ENCODE measurements at regions of chr7 and their contacts with region 1.

Region 1: GRCh38 chr7:50304158-50304910 is at the start of gene IKZF1:
- DNase-seq: peak; percentile 66
- ATAC-seq: peak; percentile 25
- H3K4me3 Mint-ChIP-seq: peak within 1 kb of the TSS; percentile 94
- H3K27ac Mint-ChIP-seq: peak within 1 kb of the TSS; percentile 97
- H3K4me1 Mint-ChIP-seq: peaks cover 33% of the 10 kb centered on the region
- H3K27me3 Mint-ChIP-seq: no peaks in the 10 kb centered on the region
- CTCF ChIP-seq: no peak
- total RNA-seq, gene IKZF1: 277 to 295 TPM

Region 2: DNA sequence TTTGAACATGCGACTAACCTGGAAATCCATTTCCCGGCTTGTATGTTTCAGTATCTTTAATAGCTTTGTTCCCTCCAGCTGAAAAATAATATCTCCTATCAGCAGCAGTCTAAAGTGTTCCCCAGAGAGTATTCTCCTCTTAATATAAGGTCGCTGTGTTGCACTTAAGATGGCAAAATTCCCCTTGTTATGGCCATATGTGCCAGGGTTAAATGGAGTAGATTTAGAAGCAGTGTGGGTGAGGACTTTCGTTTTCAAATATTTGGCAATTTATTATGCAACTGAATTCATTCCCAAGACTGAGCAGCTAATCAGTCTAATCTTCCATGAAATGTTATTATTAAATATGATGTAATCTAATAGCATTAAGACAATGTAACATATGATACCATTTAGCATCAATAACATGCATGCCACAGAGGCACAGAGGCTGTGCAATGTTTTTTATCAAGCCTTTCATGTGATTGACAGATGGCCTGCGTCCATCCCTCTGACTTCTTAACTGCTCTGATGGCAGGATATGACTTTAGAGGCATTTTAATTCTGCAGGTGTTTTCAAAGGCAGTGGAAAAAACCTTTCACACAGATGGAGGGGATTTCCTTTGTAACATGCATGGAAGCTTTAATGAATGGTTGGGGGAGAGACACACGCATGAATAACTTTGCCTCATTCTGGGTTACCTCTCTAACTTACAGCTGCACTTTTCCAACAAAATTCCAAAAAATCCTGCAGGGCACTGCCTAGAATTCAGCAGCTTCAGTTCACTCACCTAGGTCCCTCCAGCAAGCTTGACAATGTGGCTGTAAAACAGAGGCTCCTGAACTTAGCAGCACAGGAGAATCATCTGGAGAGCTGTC is 156.2 kb before region 1 on chr7:
- CTCF ChIA-PET with region 1: no interaction called
- POLR2A ChIA-PET with region 1: interaction called, 3 read pairs
- intact Hi-C with region 1: loop called (anchors 5 kb)
- DNase-seq: peak; percentile 77
- ATAC-seq: peak; percentile 82
- H3K4me3 Mint-ChIP-seq: peak overlapping the region; percentile 59
- H3K27ac Mint-ChIP-seq: peak overlapping the region; percentile 97
- H3K4me1 Mint-ChIP-seq: peaks cover 89% of the 10 kb centered on the region
- H3K27me3 Mint-ChIP-seq: no peaks in the 10 kb centered on the region
- CTCF ChIP-seq: no peak

Region 3: DNA sequence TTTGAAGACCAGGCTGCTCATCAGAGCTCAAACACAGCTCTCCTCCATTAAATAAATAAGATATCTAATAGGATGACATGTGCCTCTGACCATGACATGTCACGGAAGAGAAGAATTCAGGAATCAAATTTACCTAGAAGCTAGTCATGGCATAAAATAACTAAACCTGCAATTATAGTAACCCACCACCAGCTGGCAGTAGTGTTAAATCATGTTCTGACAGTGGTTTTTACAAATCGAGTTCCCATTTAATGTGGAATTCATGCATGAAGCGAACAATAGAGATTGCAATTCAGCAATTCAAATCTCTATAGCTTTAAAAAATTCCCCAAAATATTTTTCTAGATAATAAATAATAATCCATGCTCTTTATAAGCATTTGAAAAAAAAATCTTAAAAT is 74.4 kb before region 1 on chr7:
- CTCF ChIA-PET with region 1: interaction called, 17 read pairs
- POLR2A ChIA-PET with region 1: interaction called, 14 read pairs
- intact Hi-C with region 1: no loop called
- DNase-seq: no peak
- ATAC-seq: no peak
- H3K4me3 Mint-ChIP-seq: no peak overlapping the region
- H3K27ac Mint-ChIP-seq: no peak overlapping the region
- H3K4me1 Mint-ChIP-seq: peaks cover 42% of the 10 kb centered on the region
- H3K27me3 Mint-ChIP-seq: no peaks in the 10 kb centered on the region
- CTCF ChIP-seq: peak; percentile 98

Region 4: DNA sequence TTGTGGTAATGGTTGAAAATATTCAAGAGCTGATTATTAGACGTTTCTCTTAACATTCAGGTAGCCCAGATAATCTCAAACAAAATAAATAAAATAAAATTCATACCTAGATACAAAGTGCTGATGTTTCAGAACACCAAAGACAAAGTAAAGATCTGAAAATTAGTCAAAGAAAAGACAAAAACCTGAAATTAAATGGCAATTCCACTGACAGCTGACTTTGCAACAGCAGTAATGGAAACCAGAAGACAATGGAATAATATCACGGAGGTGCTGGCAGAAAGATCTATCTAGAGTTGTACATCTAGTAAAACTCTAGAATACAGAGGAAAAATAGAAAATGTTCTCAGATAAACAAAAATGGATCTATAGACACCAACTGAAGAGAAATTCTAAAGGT is 57.8 kb before region 1 on chr7:
- CTCF ChIA-PET with region 1: no interaction called
- POLR2A ChIA-PET with region 1: no interaction called
- intact Hi-C with region 1: no loop called
- DNase-seq: no peak
- ATAC-seq: no peak
- H3K4me3 Mint-ChIP-seq: no peak overlapping the region
- H3K27ac Mint-ChIP-seq: no peak overlapping the region
- H3K4me1 Mint-ChIP-seq: peaks cover 13% of the 10 kb centered on the region
- H3K27me3 Mint-ChIP-seq: no peaks in the 10 kb centered on the region
- CTCF ChIP-seq: no peak

Region 5: GRCh38 chr7:50272808-50273207 is 31.5 kb before region 1 on chr7:
- CTCF ChIA-PET with region 1: interaction called, 15 read pairs
- POLR2A ChIA-PET with region 1: interaction called, 133 read pairs
- intact Hi-C with region 1: no loop called
- DNase-seq: no peak
- ATAC-seq: no peak
- H3K4me3 Mint-ChIP-seq: no peak overlapping the region
- H3K27ac Mint-ChIP-seq: no peak overlapping the region
- H3K4me1 Mint-ChIP-seq: peaks cover 77% of the 10 kb centered on the region
- H3K27me3 Mint-ChIP-seq: no peaks in the 10 kb centered on the region
- CTCF ChIP-seq: no peak

Region 6: GRCh38 chr7:50317221-50317678 is 12.9 kb after region 1 on chr7:
- CTCF ChIA-PET with region 1: interaction called, 27 read pairs
- POLR2A ChIA-PET with region 1: interaction called, 158 read pairs
- intact Hi-C with region 1: no loop called
- DNase-seq: peak; percentile 75
- ATAC-seq: peak; percentile 82
- H3K4me3 Mint-ChIP-seq: peak overlapping the region; percentile 94
- H3K27ac Mint-ChIP-seq: peak overlapping the region; percentile 97
- H3K4me1 Mint-ChIP-seq: peaks cover 88% of the 10 kb centered on the region
- H3K27me3 Mint-ChIP-seq: no peaks in the 10 kb centered on the region
- CTCF ChIP-seq: peak; percentile 7

Region 7: GRCh38 chr7:50349963-50350944 is 45.9 kb after region 1 on chr7:
- CTCF ChIA-PET with region 1: interaction called, 13 read pairs
- POLR2A ChIA-PET with region 1: interaction called, 1,646 read pairs
- intact Hi-C with region 1: loop called (anchors 5 kb)
- DNase-seq: peak; percentile 94
- ATAC-seq: peak; percentile 71
- H3K4me3 Mint-ChIP-seq: peak overlapping the region; percentile 42
- H3K27ac Mint-ChIP-seq: peak overlapping the region; percentile 95
- H3K4me1 Mint-ChIP-seq: peaks cover 96% of the 10 kb centered on the region
- H3K27me3 Mint-ChIP-seq: no peaks in the 10 kb centered on the region
- CTCF ChIP-seq: no peak

Region 8: GRCh38 chr7:50369143-50370026 is 65.1 kb after region 1 on chr7:
- CTCF ChIA-PET with region 1: interaction called, 99 read pairs
- POLR2A ChIA-PET with region 1: interaction called, 1,646 read pairs
- intact Hi-C with region 1: loop called (anchors 2 kb)
- DNase-seq: peak; percentile 60
- ATAC-seq: peak; percentile 24
- H3K4me3 Mint-ChIP-seq: peak overlapping the region; percentile 5
- H3K27ac Mint-ChIP-seq: peak overlapping the region; percentile 95
- H3K4me1 Mint-ChIP-seq: peaks cover 97% of the 10 kb centered on the region
- H3K27me3 Mint-ChIP-seq: no peaks in the 10 kb centered on the region
- CTCF ChIP-seq: peak; percentile 94